ENCODE measurements at regions of chr9 and their contacts with region 1.

Region 1: GRCh38 chr9:130626249-130626992 is 38.0 kb upstream of the PRDM12 start:
- DNase-seq: no peak
- ATAC-seq: peak; percentile 75
- H3K4me3 ChIP-seq: no peak overlapping the region
- H3K27ac ChIP-seq: no peak overlapping the region
- H3K4me1 ChIP-seq: no peaks in the 10 kb centered on the region
- H3K27me3 ChIP-seq: no peaks in the 10 kb centered on the region
- CTCF ChIP-seq: no peak; a peak in 1 of 6 replicates
- POLR2A ChIP-seq: no peak
- RAD21 ChIP-seq: no peak

Region 2: DNA sequence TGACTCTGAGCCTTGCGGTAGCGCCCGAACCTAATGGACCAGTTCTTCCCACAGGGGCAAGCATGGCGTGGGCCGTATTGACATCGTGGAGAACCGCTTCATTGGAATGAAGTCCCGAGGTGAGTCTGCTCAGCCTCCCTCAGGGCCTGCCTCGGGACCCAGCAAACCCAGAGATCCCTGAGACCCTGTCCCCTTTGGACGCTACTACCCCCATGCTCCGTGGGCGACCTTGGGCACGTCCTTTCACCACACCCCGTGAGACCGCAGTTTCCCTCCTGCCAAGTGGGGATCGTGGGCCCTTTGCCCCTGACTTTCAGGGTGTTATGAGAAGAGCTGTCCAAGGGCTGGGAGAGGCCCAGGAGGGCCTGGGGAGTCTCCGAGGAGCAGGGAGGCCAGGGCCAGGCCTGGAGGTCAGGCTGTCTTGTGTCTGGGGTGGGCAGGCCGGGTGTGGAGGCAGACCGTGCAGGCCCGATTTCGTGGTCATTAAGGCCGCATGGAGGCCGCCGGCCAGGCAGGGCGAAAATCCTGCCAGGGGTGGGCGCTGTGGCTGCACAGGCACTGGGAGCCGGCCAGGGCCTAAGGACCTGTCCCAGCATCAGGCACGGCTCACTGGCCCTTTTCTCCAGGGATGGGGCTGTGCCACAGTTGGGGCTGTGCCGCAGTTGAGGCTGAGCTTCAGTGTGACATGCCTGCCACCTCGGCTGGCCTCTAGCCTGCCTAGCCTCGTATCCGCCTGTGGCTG is 145.9 kb before region 1 on chr9:
- CTCF ChIA-PET with region 1: no interaction called
- POLR2A ChIA-PET with region 1: no interaction called
- RAD21 ChIA-PET with region 1: no interaction called
- intact Hi-C with region 1: loop called (anchors 5 kb)
- DNase-seq: no peak
- ATAC-seq: peak; percentile 82
- H3K4me3 ChIP-seq: no peak overlapping the region
- H3K27ac ChIP-seq: no peak overlapping the region
- H3K4me1 ChIP-seq: no peaks in the 10 kb centered on the region
- H3K27me3 ChIP-seq: no peaks in the 10 kb centered on the region
- CTCF ChIP-seq: peak; percentile 29 to 52 (median 51); a peak in 5 of 6 replicates
- POLR2A ChIP-seq: no peak
- RAD21 ChIP-seq: peak; percentile 65